Mammary epithelial cell (primary cell): ENCODE measurements at regions of chr16 and their contacts with region 1.

Region 1: DNA sequence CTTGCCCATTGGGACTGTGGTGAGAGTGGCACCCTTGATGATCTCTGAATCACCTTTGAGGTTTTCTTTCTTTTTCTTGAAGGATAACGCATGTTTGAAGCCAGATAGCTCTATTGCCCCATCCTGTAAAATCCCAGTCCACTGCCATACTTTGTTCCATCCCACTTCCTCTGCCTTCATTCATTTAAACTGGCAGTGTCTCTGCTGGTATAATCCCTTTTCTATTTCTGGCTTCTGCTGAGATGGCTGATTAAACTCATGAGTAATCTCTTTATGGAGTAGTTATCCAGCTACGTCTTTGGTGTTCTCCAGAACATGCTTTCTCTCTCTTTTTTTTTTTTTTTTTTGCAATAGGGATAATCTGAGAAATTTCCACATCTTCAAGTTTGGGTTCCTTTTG is 656.5 kb upstream of the SALL1 start:
- DNase-seq: peak; percentile 38
- H3K4me3 ChIP-seq: no peak overlapping the region
- H3K27ac ChIP-seq: no peak overlapping the region
- H3K4me1 ChIP-seq: no peaks in the 10 kb centered on the region
- H3K27me3 ChIP-seq: no peaks in the 10 kb centered on the region
- CTCF ChIP-seq: no peak

Region 2: DNA sequence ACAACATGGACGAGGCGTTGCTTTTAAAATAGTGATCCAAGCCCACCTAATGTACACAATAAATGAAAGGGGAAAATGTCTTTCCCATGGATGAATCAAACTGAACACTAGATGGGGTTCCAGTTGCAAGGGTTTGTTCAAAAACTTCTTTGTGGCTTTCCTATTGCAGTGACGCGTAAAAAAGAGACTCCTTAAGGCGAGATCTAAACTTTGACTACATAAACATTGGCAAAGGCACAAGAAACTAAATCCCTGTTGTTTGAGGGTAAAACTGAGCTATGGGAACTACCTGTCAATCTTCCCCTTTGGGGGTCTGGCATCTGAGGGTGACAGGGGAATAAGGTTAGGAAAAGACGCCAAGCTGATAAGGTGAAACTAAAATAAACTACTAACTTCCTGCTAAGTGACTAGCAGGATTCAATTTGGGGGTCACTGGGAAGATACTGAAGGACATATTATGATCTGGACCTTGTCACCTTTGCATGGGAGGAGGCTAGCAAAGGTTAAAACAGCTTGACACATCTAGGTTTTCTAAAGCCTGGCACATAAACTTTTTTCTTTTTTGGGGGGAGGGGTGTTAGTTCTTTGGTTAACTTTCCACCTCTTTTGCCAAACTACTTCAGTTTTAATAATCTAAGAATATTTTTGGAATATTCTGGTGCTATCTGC is 661.2 kb before region 1 on chr16:
- CTCF ChIA-PET with region 1: interaction called, 18 read pairs
- dilution Hi-C with region 1: no loop called
- in situ Hi-C with region 1: no loop called
- intact Hi-C with region 1: no loop called
- DNase-seq: no peak
- H3K4me3 ChIP-seq: no peak overlapping the region
- H3K27ac ChIP-seq: no peak overlapping the region
- H3K4me1 ChIP-seq: peaks cover 9% of the 10 kb centered on the region
- H3K27me3 ChIP-seq: peaks cover 37% of the 10 kb centered on the region
- CTCF ChIP-seq: peak in 1 of 2 donors; percentile 24

Region 3: DNA sequence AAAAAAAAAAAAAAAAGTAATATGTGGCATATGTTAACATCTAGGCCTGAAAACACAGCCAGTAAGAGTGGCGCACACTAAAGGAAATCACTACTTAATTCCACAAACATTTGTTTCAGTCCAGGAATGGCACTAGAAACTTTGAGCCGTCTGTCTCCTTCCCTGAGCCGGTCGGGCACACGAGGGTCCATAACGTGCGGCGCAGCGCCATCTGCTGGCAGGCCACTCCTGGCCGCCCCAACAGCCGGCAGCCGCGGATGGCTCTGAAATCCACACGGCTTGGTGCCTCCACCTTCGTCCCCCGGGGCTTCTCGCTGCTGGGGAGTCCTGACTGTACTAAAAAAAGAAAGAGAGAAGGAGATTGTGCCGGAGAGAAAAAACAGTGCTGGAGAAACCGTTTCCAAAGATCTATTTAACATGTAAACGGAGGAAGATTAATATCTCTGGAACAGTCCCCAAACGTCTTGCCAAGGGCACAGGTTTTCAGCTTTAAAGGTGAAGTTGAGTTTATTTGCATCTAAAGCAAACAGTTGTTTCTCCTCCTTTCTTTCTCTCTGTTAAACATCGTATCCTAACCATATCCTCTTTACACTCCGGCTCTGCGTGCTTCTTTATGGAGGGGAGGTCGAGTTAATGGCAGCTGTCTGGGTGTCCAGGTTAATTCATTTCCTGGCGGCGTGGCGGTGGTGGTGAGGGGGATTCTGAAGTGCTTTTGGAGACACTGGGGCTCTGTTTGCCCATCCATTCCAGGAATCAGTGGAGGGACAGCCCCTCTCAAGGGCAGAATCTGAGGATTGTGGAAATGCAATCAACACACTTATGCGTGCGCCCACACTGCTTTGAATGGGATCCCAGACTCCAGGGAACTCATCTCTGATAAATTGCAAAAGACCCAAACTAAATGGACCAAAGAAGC is 45.2 kb before region 1 on chr16:
- CTCF ChIA-PET with region 1: no interaction called
- dilution Hi-C with region 1: no loop called
- in situ Hi-C with region 1: no loop called
- intact Hi-C with region 1: no loop called
- DNase-seq: peak; percentile 49
- H3K4me3 ChIP-seq: no peak overlapping the region
- H3K27ac ChIP-seq: no peak overlapping the region
- H3K4me1 ChIP-seq: no peaks in the 10 kb centered on the region
- H3K27me3 ChIP-seq: peaks cover 2% of the 10 kb centered on the region
- CTCF ChIP-seq: peak; percentile 80 to 94